ENCODE measurements at regions of chr11 and their contacts with region 1.

Region 1: DNA sequence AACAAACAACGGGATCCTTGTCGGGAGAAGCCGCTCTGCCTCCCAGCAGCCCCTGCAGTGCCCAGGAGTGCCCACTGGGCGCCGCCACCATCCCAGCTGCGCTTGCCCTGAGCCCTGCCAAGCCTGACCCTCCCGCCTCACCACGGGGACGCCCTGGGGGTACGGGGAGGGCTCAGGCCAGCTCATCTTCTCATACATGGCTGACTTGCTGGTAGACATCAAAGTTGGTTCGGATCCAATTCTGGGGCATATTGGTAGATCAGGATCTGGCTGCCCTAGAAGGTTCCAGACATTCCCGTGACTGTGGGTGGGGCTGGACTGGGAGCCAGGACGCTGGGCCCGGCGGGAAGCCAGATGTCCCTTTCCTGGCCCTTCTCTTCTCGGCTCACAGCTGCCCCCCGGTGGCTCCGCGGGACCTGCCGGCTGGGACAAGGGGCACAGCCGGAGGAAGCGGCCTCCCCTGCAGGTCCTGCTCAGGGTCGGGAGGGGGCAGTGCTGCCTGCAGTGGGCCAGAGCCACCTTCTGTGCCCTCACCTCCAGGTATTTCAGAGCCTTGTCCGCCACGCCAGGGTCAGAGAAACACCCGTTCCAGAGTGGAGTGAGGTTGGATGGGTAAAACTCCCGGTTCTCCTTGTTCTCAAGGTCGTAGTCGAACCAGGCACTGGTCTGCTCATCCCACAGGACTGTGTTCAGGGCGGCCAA is 10.6 kb upstream of the TREH start:
- DNase-seq: no peak
- H3K4me3 ChIP-seq: peak overlapping the region; percentile 50 to 59 (median 52)
- H3K27ac ChIP-seq: peak overlapping the region; percentile 70 to 82 (median 75)
- H3K4me1 ChIP-seq: peaks cover 14 to 23% (median 21%) of the 10 kb centered on the region in 4 donors
- H3K27me3 ChIP-seq: no peaks in the 10 kb centered on the region
- CTCF ChIP-seq: peak; percentile 61 to 82 (median 79)
- EP300 ChIP-seq: no peak
- POLR2A ChIP-seq: no peak

Region 2: DNA sequence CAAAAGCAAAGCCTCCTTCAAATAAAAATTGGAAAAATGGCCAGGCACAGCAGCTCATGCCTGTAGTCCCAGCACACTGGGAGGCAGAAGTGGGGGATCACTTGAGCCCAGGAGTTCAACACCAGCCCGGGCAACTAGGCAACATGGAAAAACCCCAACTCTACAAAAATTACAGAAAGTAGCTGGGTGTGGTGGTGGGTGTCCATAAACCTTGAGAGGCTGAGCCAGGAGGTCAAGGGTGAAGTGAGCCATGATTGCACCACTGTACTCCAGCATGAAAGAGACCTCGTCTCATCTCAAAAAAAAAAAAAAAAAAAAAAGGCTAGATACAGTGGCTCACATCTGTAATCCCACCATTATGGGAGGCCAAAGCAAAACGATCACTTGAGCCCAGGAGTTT is 78.7 kb after region 1 on chr11:
- intact Hi-C with region 1: loop called (anchors 10 kb)
- DNase-seq: no peak
- H3K4me3 ChIP-seq: no peak overlapping the region
- H3K27ac ChIP-seq: no peak overlapping the region
- H3K4me1 ChIP-seq: peaks cover 61 to 76% (median 73%) of the 10 kb centered on the region in 4 donors
- H3K27me3 ChIP-seq: no peaks in the 10 kb centered on the region
- CTCF ChIP-seq: no peak
- EP300 ChIP-seq: no peak
- POLR2A ChIP-seq: no peak

Region 3: DNA sequence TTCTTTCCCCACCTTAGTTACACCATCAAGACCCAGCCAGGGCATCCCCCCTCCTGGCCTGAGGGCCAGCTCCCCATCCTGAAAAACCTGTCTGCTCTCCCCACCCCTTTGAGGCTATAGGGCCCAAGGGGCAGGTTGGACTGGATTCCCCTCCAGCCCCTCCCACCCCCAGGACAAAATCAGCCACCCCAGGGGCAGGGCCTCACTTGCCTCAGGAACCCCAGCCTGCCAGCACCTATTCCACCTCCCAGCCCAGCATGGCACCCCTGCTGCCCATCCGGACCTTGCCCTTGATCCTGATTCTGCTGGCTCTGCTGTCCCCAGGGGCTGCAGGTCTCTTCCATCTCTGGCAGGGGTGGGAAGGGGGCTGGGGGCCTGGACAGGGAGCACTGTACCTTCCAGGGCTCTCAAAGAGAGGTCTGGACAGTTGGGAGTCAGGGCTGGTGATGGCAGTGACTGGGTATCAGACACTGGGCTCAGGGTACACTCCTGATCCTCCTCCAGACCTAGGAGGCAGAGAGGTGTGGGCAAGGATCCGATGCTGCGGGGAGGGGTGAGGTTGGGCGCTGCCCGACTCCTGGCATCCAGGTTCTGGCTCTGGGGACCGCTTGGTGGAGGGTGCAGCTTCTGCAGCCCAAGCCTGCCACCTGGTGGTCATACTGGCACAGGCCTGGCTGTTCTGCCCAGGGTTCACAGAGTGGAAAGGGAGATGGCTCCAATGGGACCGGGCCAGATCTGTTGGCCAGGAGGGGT is 266.3 kb after region 1 on chr11 and contains the start of gene UPK2:
- intact Hi-C with region 1: loop called (anchors 2 kb)
- DNase-seq: peak; percentile 96
- H3K4me3 ChIP-seq: no peak within 1 kb of the TSS
- H3K27ac ChIP-seq: no peak within 1 kb of the TSS
- H3K4me1 ChIP-seq: peaks cover 0 to 8% (median 7%) of the 10 kb centered on the region in 4 donors
- H3K27me3 ChIP-seq: peaks cover 0 to 12% (median 0%) of the 10 kb centered on the region in 4 donors
- CTCF ChIP-seq: peak; percentile 92 to 99 (median 97)
- EP300 ChIP-seq: no peak
- POLR2A ChIP-seq: no peak
- total RNA-seq, gene UPK2: not detected

Region 4: DNA sequence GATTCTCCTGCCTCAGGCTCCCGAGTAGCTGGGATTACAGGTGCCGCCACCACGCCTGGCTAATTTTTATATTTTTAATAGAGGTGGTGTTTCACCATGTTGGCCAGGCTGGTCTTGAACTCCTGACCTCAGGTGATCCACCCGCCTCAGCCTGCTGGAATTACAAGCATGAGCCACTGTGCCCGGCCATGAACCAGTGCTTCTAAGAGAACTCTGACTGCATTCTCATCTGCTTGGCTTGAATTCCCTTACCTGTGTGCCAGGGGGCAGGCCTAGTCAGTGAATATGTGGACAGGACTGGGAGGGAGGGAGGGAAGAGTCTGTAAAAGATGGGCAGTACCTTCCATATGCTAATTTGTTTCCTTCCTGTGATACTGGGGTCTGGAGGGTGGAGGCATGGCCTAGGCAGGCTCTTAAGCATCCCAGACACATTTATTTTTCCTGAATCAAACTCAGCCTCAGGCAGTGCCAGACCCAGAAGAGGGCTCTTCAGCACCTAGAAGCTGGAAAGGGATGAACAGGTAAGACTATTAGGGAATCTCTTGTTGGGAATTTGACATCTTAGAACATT is 321.6 kb after region 1 on chr11:
- intact Hi-C with region 1: no loop called
- DNase-seq: no peak
- H3K4me3 ChIP-seq: no peak overlapping the region
- H3K27ac ChIP-seq: no peak overlapping the region
- H3K4me1 ChIP-seq: peaks cover 11 to 16% (median 13%) of the 10 kb centered on the region in 4 donors
- H3K27me3 ChIP-seq: no peaks in the 10 kb centered on the region
- CTCF ChIP-seq: no peak
- EP300 ChIP-seq: no peak
- POLR2A ChIP-seq: no peak

Measured in esophagus muscularis mucosa (tissue), 4 donors.